Spleen (tissue), 13 donors: ENCODE measurements at regions of chr4 and their contacts with region 1.

Region 1: GRCh38 chr4:22688236-22688635 is 4.5 kb upstream of the GBA3 start:
- DNase-seq: no peak
- H3K4me3 ChIP-seq: no peak overlapping the region
- H3K27ac ChIP-seq: no peak overlapping the region
- H3K4me1 ChIP-seq: peaks cover 0 to 8% (median 0%) of the 10 kb centered on the region in 6 donors
- H3K27me3 ChIP-seq: no peaks in the 10 kb centered on the region
- CTCF ChIP-seq: no peak
- POLR2A ChIP-seq: no peak

Region 2: DNA sequence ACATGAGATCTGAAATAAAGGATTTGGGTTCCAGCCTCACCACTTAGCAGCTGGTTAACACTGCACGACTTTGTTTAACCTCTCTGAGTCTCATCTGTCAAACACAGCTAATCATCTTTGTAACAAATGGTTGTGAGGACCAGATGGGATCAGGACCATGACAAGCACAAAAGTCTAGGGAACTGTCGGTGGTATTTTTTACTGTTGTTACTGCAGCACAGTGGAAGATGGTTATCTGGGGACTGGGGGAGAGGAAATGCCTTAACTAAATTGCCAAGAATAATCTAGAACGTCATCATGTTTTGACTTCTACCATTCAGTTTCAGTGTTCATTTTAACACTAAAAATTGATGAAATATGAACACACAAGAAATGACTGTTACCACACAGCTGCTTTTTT is 271.8 kb before region 1 on chr4:
- intact Hi-C with region 1: loop called (anchors 5 kb)
- DNase-seq: no peak
- H3K4me3 ChIP-seq: no peak overlapping the region
- H3K27ac ChIP-seq: no peak overlapping the region
- H3K4me1 ChIP-seq: no peaks in the 10 kb centered on the region
- H3K27me3 ChIP-seq: no peaks in the 10 kb centered on the region
- CTCF ChIP-seq: no peak
- POLR2A ChIP-seq: no peak

Region 3: GRCh38 chr4:22500831-22501719 is 187.2 kb before region 1 on chr4:
- intact Hi-C with region 1: loop called (anchors 10 kb)
- DNase-seq: no peak
- H3K4me3 ChIP-seq: no peak overlapping the region
- H3K27ac ChIP-seq: no peak overlapping the region
- H3K4me1 ChIP-seq: no peaks in the 10 kb centered on the region
- H3K27me3 ChIP-seq: no peaks in the 10 kb centered on the region
- CTCF ChIP-seq: no peak
- POLR2A ChIP-seq: no peak

Region 4: GRCh38 chr4:23070848-23071570 is 382.8 kb after region 1 on chr4:
- intact Hi-C with region 1: no loop called
- DNase-seq: no peak
- H3K4me3 ChIP-seq: no peak overlapping the region
- H3K27ac ChIP-seq: no peak overlapping the region
- H3K4me1 ChIP-seq: no peaks in the 10 kb centered on the region
- H3K27me3 ChIP-seq: no peaks in the 10 kb centered on the region
- CTCF ChIP-seq: no peak
- POLR2A ChIP-seq: no peak